Activated T-helper 2 cell treated with anti-CD3 and anti-CD28 coated beads, Interferon-gamma antibody, Interleukin-2, Interleukin-4, amounts not matched to agents 10 μg/mL and 5 μg/mL and 100 μg/mL, durations not matched to agents 14 hours and 24 hours and 36 hours (primary cell): ENCODE measurements at regions of chr2 and their contacts with region 1.

Region 1: DNA sequence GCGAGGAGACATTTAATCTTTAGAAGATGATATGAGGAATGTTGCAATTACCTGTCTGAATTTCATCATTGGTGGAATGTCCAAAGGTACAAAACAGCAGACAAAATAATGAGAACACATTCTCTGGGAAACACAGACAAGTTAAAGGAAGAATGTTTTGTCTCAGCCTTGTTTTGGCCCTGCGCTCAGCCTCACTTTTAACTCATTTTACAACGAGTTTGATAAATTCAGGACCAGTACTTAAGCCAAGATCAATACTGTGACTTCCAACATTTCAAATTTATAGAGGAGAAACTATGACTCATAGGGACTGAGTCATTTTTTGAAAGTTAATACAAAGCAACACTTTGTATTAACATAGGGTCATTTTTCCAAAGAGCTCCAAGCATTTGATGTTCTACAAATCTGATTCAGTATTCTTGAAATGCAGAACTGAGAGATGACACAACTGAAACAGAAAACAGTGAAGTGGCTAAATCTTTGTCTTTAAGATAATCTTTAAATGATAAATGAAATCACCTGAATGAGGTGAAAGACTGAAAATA is 833.2 kb upstream of the CHAC2 start:
- DNase-seq: no peak
- H3K4me3 Mint-ChIP-seq: no peak overlapping the region
- H3K27ac Mint-ChIP-seq: peak overlapping the region; percentile 10
- H3K4me1 Mint-ChIP-seq: peaks cover 22% of the 10 kb centered on the region
- H3K27me3 Mint-ChIP-seq: no peaks in the 10 kb centered on the region

Region 2: GRCh38 chr2:52976253-52976949 is 42.0 kb after region 1 on chr2:
- intact Hi-C with region 1: loop called (anchors 1 kb)
- DNase-seq: no peak
- H3K4me3 Mint-ChIP-seq: no peak overlapping the region
- H3K27ac Mint-ChIP-seq: peak overlapping the region; percentile 8
- H3K4me1 Mint-ChIP-seq: peaks cover 5% of the 10 kb centered on the region
- H3K27me3 Mint-ChIP-seq: no peaks in the 10 kb centered on the region